ENCODE measurements at regions of chr5 and their contacts with region 1.

Region 1: DNA sequence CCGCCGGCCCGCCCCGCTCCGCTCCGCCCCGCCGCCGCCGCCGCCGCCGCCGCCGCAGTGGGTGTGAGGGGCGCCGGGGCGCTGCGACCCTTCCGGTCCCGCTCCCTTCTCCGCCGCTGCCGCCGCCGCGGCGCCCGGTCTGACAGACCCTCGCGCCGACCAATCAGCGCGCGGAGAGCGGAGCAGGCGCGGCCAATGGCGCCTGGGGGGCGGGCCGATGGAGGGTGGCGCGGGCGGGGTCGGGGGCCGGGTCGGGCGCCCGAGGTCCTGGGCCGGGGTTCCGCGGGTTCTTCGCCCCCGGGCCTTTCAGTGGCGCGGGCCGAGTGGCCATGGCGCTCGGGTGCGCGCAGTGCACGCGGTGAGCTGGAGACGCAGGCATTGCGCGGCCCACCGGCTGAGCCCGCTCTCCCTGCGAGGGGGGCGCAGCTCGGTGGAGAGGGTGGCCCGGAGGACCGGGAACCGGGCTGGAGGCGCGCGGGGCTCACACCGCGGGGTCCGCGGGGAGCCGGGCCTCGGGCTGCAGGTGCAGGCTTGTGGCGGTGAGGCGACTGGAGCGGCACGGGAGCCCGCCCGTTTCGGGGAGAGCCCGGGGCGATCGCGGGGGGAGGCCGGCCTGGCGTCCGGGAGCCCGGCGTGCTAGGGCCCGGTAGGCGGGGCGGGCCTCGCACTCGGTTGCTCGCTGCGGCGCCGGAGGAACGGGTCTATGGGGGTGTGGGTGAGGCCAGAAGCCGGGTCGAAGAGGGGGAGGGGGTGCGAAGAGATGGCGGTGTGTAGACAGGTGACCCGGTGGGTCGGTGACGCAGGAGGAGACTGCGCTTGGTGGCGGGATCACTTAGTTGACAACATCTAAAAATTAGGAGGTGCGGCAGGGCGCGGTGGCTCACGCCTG is at the start of gene MAPK9:
- DNase-seq: peak; percentile 89 to 92
- ATAC-seq: peak; percentile 91 to 93 (median 92)
- H3K4me3 ChIP-seq: peak within 1 kb of the TSS; percentile 99
- H3K27ac ChIP-seq: peak within 1 kb of the TSS; percentile 85
- H3K4me1 ChIP-seq: peaks cover 25% of the 10 kb centered on the region
- H3K27me3 ChIP-seq: no peaks in the 10 kb centered on the region
- CTCF ChIP-seq: no peak
- total RNA-seq, gene MAPK9: 32.1 to 35.9 (median 34.6) TPM

Region 2: GRCh38 chr5:180315762-180316212 is 23.6 kb after region 1 on chr5:
- intact Hi-C with region 1: loop called in 1 of 2 experiments (anchors 1 kb)
- DNase-seq: peak; percentile 67 to 76
- ATAC-seq: peak in 3 of 4 donors; percentile 37 to 64 (median 52)
- H3K4me3 ChIP-seq: no peak overlapping the region
- H3K27ac ChIP-seq: no peak overlapping the region
- H3K4me1 ChIP-seq: no peaks in the 10 kb centered on the region
- H3K27me3 ChIP-seq: no peaks in the 10 kb centered on the region
- CTCF ChIP-seq: peak; percentile 68

Region 3: DNA sequence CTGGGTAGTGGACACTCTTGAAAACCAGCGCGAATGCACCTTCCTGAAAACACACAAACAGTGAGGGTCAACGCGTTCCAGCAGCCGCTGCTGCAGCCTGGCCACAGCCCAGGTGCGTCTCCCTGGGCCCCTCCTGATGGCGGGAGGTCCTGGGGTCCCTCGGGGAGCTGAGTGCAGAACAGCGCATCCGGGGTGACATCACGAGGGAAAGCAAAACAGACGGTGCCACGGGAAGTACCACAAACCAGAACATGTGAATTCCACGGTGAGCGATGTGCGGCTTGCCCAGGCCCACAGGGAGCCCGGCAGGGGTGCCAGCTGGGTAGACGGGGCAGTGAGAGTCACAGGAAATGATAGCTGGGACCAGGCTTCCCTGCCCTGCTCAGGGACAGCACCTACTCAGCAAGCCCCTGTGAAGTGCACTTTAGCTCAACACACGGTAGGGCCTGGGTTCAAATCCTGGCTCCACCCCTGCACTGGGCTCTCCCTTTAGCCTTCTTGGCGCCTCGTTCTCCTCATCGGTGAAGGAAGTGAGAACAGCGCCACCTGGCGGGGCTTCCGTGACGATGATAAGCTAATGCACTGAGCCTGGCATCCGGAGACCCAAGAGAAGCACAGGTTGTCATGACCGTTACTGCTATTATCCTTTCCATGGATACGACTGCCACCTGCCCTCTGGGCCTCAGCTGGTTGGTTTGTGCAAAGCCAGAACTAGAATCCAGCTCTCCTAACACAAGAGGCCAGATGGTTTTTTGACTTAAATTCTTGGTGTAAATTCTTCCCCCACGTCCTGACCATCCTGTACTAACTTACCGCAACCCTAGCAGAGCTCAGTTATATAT is 36.3 kb after region 1 on chr5:
- intact Hi-C with region 1: loop called (anchors 2 kb)
- DNase-seq: peak; percentile 82 to 90
- ATAC-seq: peak; percentile 65 to 81 (median 70)
- H3K4me3 ChIP-seq: no peak overlapping the region
- H3K27ac ChIP-seq: no peak overlapping the region
- H3K4me1 ChIP-seq: no peaks in the 10 kb centered on the region
- H3K27me3 ChIP-seq: no peaks in the 10 kb centered on the region
- CTCF ChIP-seq: peak; percentile 71

Region 4: GRCh38 chr5:180470966-180471582 is 178.9 kb after region 1 on chr5:
- intact Hi-C with region 1: loop called (anchors 1 to 2 kb)
- DNase-seq: peak in 1 of 2 donors; percentile 46
- ATAC-seq: peak; percentile 70 to 82 (median 74)
- H3K4me3 ChIP-seq: no peak overlapping the region
- H3K27ac ChIP-seq: no peak overlapping the region
- H3K4me1 ChIP-seq: no peaks in the 10 kb centered on the region
- H3K27me3 ChIP-seq: peaks cover 0 to 2% (median 0%) of the 10 kb centered on the region in 3 donors
- CTCF ChIP-seq: peak; percentile 94

Region 5: GRCh38 chr5:180742727-180743126 is 450.5 kb after region 1 on chr5:
- intact Hi-C with region 1: no loop called
- DNase-seq: no peak
- ATAC-seq: no peak
- H3K4me3 ChIP-seq: no peak overlapping the region
- H3K27ac ChIP-seq: no peak overlapping the region
- H3K4me1 ChIP-seq: no peaks in the 10 kb centered on the region
- H3K27me3 ChIP-seq: peaks cover 0 to 7% (median 0%) of the 10 kb centered on the region in 3 donors
- CTCF ChIP-seq: no peak

Measured in psoas muscle (tissue), 8 donors.